Gastrocnemius medialis (tissue), 4 donors: ENCODE measurements at regions of chr3 and their contacts with region 1.

Region 1: GRCh38 chr3:10738688-10739372 is 77.2 kb upstream of the SLC6A11 start:
- DNase-seq: peak; percentile 24 to 57
- ATAC-seq: peak; percentile 74 to 93
- H3K4me3 ChIP-seq: peak overlapping the region; percentile 2 to 51 (median 28)
- H3K27ac ChIP-seq: no peak overlapping the region
- H3K4me1 ChIP-seq: no peaks in the 10 kb centered on the region
- H3K27me3 ChIP-seq: peaks cover 18 to 23% (median 22%) of the 10 kb centered on the region in 3 donors
- CTCF ChIP-seq: peak; percentile 65 to 87 (median 80)
- POLR2A ChIP-seq: no peak

Region 2: DNA sequence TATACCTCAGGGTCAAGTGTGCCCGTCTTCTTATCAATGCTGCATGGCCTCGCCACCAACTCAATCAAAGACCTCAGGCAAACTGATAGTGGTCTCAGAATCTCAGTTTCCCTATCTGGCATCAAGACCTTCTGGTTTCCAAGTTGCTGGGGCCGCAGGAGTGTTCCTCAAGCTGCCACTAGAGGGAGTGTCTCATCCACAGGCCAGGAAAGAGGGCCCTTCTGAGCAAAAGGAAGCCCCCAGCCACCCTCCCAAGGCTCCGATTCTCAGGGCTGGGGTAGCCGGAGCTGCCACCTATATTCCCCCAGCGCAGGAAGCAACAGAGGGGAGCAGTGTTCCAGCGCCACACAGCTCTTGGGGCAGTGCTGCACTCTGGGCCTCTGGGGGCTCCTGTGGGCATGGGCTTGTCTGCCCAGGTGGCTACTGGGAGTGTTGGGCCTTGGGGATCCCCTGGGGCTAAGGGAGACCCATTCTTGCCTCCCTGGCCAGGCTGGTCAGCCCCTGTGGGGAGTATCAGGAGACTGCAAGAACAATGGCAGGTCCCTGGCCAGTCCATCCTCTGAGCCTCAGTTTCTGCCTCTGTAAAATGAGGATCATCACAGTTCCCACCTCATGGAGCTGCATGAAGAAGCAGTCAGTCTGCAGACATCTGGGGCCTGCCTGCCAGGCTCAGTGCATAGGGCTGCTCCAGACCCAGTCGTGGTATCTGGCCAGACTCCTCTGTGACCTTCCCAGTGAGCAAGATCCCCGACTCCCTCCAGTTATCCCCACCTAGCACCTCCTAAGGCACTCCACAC is 394.5 kb before region 1 on chr3:
- in situ Hi-C with region 1: no loop called
- intact Hi-C with region 1: loop called (anchors 2 kb)
- DNase-seq: no peak
- ATAC-seq: peak; percentile 59 to 61
- H3K4me3 ChIP-seq: no peak overlapping the region
- H3K27ac ChIP-seq: no peak overlapping the region
- H3K4me1 ChIP-seq: peaks cover 4 to 9% of the 10 kb centered on the region in 2 donors
- H3K27me3 ChIP-seq: no peaks in the 10 kb centered on the region
- CTCF ChIP-seq: peak; percentile 79 to 95 (median 86)
- POLR2A ChIP-seq: no peak

Region 3: GRCh38 chr3:10357592-10358308 is 381.1 kb before region 1 on chr3:
- in situ Hi-C with region 1: loop called (anchors 10 to 25 kb)
- intact Hi-C with region 1: no loop called
- DNase-seq: no peak
- ATAC-seq: peak in 1 of 2 donors; percentile 44
- H3K4me3 ChIP-seq: no peak overlapping the region
- H3K27ac ChIP-seq: peak overlapping the region in 1 of 4 donors; percentile 13
- H3K4me1 ChIP-seq: peaks cover 0 to 4% of the 10 kb centered on the region in 2 donors
- H3K27me3 ChIP-seq: no peaks in the 10 kb centered on the region
- CTCF ChIP-seq: no peak
- POLR2A ChIP-seq: no peak

Region 4: DNA sequence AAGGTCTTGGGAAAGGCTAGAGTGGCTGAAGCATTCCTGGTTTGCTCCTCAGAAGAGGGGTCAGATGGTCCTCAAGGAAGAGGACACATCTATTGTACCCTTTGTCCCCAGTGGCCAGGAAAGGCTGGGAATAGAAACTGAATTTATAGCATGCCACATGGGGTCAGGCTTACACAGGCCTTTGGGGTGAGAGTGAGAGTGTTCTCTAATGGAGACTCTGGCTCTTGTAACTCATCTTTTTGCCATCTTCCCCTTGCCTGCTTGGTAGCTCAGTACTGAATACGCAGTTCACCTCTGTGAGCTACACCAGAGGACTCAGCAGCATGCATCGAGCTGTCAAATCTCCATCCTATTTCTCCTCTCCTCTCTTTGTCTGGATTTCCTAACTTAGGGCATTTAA is 321.0 kb before region 1 on chr3:
- in situ Hi-C with region 1: no loop called
- intact Hi-C with region 1: loop called (anchors 5 kb)
- DNase-seq: no peak
- ATAC-seq: peak; percentile 50 to 60
- H3K4me3 ChIP-seq: no peak overlapping the region
- H3K27ac ChIP-seq: no peak overlapping the region
- H3K4me1 ChIP-seq: no peaks in the 10 kb centered on the region
- H3K27me3 ChIP-seq: no peaks in the 10 kb centered on the region
- CTCF ChIP-seq: peak in 4 of 5 experiments; percentile 13 to 37 (median 27)
- POLR2A ChIP-seq: no peak

Region 5: DNA sequence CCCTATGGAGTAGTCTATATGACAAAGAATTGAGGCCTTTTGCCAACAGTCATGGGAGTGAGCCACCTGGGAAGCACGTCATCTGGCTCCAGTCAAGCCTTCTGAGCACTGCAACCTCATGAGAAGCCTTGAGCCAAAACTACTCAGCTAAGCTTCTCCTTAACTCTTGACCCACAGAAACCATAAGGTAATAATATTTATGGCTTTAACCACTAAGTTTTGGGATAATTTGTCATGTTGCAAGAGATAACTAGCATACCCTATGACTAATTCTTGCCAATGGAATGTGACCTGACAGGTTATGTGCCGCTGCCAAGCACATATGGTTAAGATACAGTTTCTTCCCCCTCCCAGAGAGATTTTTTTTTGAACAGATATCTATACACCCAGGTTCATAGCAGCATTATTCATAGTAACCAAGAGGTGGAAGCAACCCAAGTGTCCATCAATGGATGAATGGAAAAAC is 65.4 kb after region 1 on chr3:
- in situ Hi-C with region 1: no loop called
- intact Hi-C with region 1: no loop called
- DNase-seq: no peak
- ATAC-seq: no peak
- H3K4me3 ChIP-seq: no peak overlapping the region
- H3K27ac ChIP-seq: no peak overlapping the region
- H3K4me1 ChIP-seq: no peaks in the 10 kb centered on the region
- H3K27me3 ChIP-seq: peaks cover 0 to 5% (median 5%) of the 10 kb centered on the region in 3 donors
- CTCF ChIP-seq: no peak
- POLR2A ChIP-seq: no peak